Activated CD4-positive, alpha-beta T cell treated with anti-CD3 and anti-CD28 coated beads for 36 hours (primary cell): ENCODE measurements at regions of chr6 and their contacts with region 1.

Region 1: DNA sequence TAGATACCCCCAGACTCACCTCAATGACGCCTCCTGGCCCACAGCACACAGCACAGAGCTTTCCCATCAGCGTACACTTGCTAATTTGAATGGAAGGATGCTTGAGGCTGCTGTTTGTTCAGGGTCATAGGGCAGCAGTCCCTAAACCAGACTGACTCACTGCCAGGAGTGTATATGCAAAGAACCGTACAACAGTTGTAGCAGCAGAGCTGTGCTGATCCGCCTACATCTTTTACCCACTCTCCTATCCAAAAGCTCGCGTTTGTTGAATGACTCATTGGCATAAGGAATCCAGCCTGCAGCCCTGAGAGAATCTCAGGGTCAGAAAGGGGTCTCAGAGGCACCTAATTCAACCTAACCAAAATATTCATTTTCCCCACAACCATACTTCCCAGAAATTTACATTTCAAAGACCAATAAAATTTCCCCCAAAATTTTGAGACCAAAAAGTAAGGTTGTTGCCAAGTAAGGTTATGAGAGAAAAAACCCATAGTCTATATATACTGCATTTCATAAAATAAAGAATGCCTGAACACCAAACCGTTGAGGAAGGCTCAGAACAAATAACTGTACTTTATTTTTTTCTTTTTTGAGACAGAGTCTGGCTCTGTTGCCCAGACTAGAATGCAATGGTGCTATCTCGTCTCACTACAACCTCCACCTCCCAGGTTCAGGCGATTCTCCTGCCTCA is 35.3 kb upstream of the CCND3 start:
- DNase-seq: peak; percentile 66
- ATAC-seq: peak; percentile 94
- H3K4me3 Mint-ChIP-seq: peak overlapping the region; percentile 71
- H3K27ac Mint-ChIP-seq: peak overlapping the region; percentile 99
- H3K4me1 Mint-ChIP-seq: peaks cover 78% of the 10 kb centered on the region
- H3K27me3 Mint-ChIP-seq: no peaks in the 10 kb centered on the region

Region 2: DNA sequence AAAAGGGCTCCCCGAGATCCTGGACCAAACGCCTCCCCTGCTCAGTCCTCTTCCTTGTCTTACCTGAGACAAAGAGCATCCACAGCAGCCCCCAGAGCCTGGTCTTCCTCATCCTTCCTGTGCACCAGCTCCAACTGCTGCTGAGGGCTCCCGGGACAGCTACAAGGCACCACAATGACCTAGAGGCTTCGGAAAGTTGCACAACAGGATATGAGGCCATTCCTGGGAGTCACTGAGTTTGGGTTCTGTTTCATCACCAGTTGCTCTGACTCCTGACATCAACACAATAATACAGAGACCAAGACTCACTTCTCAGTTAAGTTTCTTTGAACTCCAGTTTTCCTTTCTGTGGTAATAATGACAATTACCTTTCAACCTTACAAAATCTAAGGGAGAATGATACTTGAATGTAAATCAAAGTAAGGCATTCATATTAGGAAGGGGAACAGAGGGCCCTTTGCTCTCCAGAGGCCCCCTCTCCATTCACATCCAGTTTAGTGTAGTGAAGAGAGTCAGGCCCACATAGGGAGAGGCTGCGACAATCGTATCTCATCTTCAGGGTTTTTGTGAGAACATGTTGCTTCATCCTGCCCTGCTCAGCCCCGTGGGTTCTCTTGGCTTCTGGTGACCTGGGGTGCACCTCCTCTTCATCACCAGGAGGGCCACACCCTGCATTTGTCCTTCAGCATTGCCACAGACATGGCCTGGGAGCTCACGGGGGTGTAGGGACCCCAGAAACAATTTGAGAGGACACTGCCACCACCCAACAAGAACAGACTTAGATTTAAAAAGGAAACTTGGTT is 690.2 kb before region 1 on chr6 and contains the start of gene TREM1:
- CTCF ChIA-PET with region 1: no interaction called
- POLR2A ChIA-PET with region 1: no interaction called
- intact Hi-C with region 1: no loop called
- DNase-seq: no peak
- ATAC-seq: peak; percentile 38
- H3K4me3 Mint-ChIP-seq: no peak within 1 kb of the TSS
- H3K27ac Mint-ChIP-seq: no peak within 1 kb of the TSS
- H3K4me1 Mint-ChIP-seq: peaks cover 13% of the 10 kb centered on the region
- H3K27me3 Mint-ChIP-seq: peaks cover 3% of the 10 kb centered on the region
- total RNA-seq, gene TREM1: 0.62 to 0.86 TPM

Region 3: GRCh38 chr6:41964201-41964887 is 12.6 kb before region 1 on chr6:
- CTCF ChIA-PET with region 1: interaction called, 11 read pairs
- POLR2A ChIA-PET with region 1: interaction called, 7 read pairs
- intact Hi-C with region 1: loop called in 1 of 2 experiments (anchors 2 kb)
- DNase-seq: peak; percentile 59
- ATAC-seq: peak; percentile 48
- H3K4me3 Mint-ChIP-seq: no peak overlapping the region
- H3K27ac Mint-ChIP-seq: peak overlapping the region; percentile 86
- H3K4me1 Mint-ChIP-seq: peaks cover 95% of the 10 kb centered on the region
- H3K27me3 Mint-ChIP-seq: no peaks in the 10 kb centered on the region

Region 4: GRCh38 chr6:42009966-42010891 is 33.3 kb after region 1 on chr6:
- CTCF ChIA-PET with region 1: interaction called, 3 read pairs
- POLR2A ChIA-PET with region 1: no interaction called
- intact Hi-C with region 1: loop called in 1 of 2 experiments (anchors 2 kb)
- DNase-seq: peak; percentile 71
- ATAC-seq: peak; percentile 71
- H3K4me3 Mint-ChIP-seq: peak overlapping the region; percentile 66
- H3K27ac Mint-ChIP-seq: peak overlapping the region; percentile 98
- H3K4me1 Mint-ChIP-seq: peaks cover 76% of the 10 kb centered on the region
- H3K27me3 Mint-ChIP-seq: no peaks in the 10 kb centered on the region

Region 5: DNA sequence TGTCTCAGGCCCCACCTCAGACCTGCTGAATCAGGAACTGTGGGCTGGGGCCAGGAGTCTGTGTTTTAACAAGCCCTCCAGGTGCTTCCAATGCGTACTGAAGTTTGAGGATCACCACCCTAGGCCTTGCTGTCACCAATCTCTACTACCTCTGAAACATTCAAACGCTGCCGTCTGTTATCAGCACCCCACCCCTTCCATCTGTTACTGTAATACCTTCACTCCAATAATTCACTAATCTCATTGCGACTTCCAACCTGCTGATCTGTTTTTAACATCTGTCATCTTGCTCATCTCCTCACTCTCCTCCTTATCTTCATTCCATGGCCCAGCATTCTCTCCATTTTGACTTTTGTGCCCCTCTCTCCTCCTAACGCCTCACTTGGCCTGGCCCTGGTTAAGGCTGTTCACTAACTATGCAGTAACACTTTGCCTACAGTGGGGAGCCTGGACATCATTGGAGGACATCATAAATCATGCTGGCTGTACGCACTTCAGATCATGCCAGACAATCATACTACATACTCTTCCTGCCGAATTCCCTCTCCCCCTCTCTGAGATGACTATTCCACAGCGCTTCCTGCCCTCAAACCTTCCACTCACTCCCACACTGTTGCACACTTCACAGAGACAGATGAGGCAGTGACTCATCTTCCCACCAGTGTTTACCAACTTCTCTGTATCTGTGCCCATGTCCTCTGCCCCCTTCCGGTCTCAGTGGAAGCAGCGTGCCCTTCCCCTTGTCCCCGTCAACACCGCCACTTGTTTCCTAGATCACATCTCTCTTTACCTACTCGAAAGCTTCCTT is 220.8 kb after region 1 on chr6:
- CTCF ChIA-PET with region 1: no interaction called
- POLR2A ChIA-PET with region 1: no interaction called
- intact Hi-C with region 1: no loop called
- DNase-seq: peak; percentile 37
- ATAC-seq: peak; percentile 80
- H3K4me3 Mint-ChIP-seq: no peak overlapping the region
- H3K27ac Mint-ChIP-seq: no peak overlapping the region
- H3K4me1 Mint-ChIP-seq: peaks cover 2% of the 10 kb centered on the region
- H3K27me3 Mint-ChIP-seq: no peaks in the 10 kb centered on the region

Region 6: GRCh38 chr6:42505377-42505702 is 528.4 kb after region 1 on chr6:
- CTCF ChIA-PET with region 1: no interaction called
- POLR2A ChIA-PET with region 1: no interaction called
- intact Hi-C with region 1: no loop called
- DNase-seq: no peak
- ATAC-seq: peak; percentile 63
- H3K4me3 Mint-ChIP-seq: no peak overlapping the region
- H3K27ac Mint-ChIP-seq: no peak overlapping the region
- H3K4me1 Mint-ChIP-seq: peaks cover 33% of the 10 kb centered on the region
- H3K27me3 Mint-ChIP-seq: no peaks in the 10 kb centered on the region